ENCODE measurements at regions of chr11 and their contacts with region 1.

Region 1: DNA sequence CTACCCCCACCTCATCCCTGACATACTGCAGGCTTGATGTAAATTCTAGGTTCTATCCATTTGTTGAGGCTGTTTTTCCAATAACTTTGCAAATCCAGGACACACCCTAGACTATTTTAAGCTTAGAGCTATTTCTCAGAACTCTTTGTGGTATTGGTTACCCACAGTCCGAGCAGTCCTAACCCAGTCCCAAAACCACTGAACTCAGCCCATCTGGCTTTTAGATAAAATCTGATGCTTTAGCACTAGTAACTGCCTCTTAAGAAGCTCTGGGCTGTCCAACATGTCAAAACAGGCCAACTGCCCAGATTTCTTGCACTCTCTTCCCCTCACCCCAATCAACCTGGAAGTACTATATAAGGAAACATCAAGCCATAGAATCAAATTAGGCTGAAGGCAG is 344.4 kb upstream of the CADM1 start:
- DNase-seq: no peak
- H3K4me3 Mint-ChIP-seq: no peak overlapping the region
- H3K27ac Mint-ChIP-seq: no peak overlapping the region
- H3K4me1 Mint-ChIP-seq: no peaks in the 10 kb centered on the region
- H3K27me3 Mint-ChIP-seq: no peaks in the 10 kb centered on the region
- CTCF ChIP-seq: no peak

Region 2: DNA sequence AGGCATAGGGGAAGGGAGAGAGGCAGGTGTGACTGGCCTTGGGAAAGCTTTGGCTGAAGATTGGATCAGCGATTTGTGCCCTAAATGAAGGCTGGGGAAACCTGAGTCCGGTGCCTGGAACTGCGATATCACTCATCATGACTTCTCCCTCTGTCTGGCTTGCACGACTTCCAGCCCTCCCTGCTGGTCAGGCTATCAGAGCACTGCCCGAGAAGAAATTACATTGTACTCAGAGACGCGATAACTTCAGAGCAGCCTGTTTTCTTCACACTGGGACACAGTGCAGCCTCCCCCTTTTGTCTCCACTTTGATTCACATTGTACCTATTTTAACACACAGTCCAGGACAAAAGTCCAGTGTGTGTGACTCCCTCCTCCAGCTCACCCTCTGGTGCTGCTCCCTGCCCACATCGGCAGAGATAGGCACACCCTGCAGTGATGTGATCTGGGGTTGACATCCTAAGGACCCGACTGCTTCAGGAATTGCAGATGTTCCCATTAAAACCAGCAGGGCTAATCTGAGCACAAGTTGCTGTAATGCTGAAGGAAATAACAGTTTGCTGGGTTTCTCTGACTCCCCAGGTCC is 282.3 kb before region 1 on chr11:
- CTCF ChIA-PET with region 1: no interaction called
- intact Hi-C with region 1: loop called (anchors 10 kb)
- DNase-seq: no peak
- H3K4me3 Mint-ChIP-seq: no peak overlapping the region
- H3K27ac Mint-ChIP-seq: no peak overlapping the region
- H3K4me1 Mint-ChIP-seq: no peaks in the 10 kb centered on the region
- H3K27me3 Mint-ChIP-seq: no peaks in the 10 kb centered on the region
- CTCF ChIP-seq: no peak